GM13976 (cell line): ENCODE measurements at regions of chr14 and their contacts with region 1.

Region 1: DNA sequence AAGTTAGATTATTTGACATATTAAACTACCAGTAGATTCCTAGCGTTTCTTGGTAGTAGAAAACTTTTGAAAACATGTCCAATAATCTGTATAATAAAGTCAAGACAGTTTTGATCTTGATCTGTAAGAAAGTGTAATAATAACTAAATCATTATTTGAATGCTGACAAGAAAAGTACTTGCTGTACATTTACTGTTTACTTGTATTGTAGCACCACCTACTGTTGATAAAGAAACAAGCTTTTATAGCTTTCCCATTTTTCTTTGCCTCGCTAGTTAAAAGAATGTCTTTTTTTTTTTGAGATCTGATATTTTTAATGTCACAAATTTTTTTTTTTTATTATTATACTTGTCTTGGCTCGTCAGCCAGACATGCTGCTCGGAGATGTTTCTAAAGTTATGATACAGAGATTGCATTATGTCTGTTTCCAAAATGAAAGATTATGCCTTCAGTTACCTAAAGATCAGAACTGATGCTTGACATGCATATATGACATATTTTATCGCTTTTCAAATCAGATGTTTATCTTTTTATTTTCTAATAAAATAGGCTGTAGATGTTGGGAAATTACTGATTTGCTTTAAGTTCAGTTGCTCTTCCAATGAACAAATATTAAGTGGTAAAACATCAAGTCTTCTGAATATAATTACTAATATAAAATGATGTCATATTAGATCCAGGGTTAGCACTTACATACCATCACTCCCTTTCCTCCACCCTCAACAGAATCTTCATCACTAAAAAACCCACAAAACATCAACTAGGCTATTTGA is 140.5 kb downstream of the AKAP6 start:
- DNase-seq: peak; percentile 24
- CTCF ChIP-seq: peak; percentile 25

Region 2: DNA sequence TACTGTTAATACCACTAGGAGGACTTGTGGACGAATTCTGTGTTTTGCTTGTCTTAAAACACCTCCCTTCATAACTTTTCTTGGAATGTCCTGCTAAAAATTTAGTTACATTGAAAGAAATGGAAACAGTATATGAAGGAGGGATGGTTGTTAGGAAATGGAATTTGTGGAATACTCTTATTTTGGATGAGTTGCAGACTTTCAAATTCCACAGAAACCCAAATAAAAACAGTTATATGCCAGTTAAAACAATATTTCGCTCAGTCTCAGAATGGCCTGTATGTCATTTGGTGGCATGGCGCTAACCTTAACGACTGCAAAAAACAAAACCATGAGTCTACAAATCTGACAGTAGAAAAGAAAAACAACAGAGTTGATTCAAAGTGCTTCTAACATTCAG is 404.6 kb before region 1 on chr14:
- in situ Hi-C with region 1: loop called (anchors 10 kb)
- DNase-seq: no peak
- CTCF ChIP-seq: no peak